MCF 10A (cell line): ENCODE measurements at regions of chr22 and their contacts with region 1.

Region 1: GRCh38 chr22:36065775-36066559 is 37.3 kb upstream of the RBFOX2 start:
- DNase-seq: peak; percentile 91
- H3K4me3 Mint-ChIP-seq: peak overlapping the region; percentile 75
- H3K27ac Mint-ChIP-seq: peak overlapping the region; percentile 82
- H3K4me1 Mint-ChIP-seq: no peaks in the 10 kb centered on the region
- H3K27me3 Mint-ChIP-seq: no peaks in the 10 kb centered on the region
- CTCF ChIP-seq: peak; percentile 99

Region 2: DNA sequence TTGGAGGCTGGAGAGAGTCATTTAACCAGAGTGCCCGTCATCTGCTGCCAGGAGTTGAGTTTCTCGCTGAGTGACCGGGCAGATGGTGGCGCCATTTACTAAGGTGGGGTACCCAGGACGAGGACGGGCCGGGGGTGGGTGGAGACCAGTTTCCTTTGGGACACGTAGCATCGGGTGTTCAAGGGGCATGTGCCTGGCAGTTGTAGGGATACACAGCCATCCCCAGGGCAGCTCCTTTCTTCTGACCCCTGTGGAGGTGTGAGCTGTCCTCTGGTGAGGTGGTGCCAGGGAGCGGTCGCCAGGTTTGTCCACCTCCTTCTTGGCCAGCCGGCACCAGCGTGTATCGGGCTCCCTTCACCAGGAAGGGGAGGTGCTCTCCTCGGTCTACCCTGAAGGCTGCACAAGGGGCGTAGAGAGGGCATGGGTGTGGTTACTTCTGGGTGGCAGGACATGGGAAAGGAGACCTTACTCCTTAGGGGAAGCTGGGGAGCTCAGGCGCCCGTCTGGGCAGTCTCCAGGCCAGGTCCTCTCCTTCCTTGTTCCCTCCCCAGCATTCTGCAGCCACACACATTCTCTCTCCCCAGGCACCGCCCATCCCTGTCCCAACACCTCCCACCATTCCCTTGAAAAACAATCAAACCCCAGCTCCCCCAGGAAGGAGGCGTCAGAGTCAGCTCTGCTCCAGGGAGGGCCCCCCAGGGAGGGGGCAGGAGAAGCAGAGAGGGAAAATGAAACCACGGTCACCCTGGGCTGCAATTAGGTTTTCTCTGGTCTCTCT is 438.5 kb before region 1 on chr22:
- CTCF ChIA-PET with region 1: interaction called, 17 read pairs
- POLR2A ChIA-PET with region 1: interaction called, 3 read pairs
- intact Hi-C with region 1: loop called (anchors 5 kb)
- DNase-seq: peak; percentile 88
- H3K4me3 Mint-ChIP-seq: peak overlapping the region; percentile 77
- H3K27ac Mint-ChIP-seq: peak overlapping the region; percentile 96
- H3K4me1 Mint-ChIP-seq: peaks cover 35% of the 10 kb centered on the region
- H3K27me3 Mint-ChIP-seq: no peaks in the 10 kb centered on the region
- CTCF ChIP-seq: peak; percentile 58

Region 3: DNA sequence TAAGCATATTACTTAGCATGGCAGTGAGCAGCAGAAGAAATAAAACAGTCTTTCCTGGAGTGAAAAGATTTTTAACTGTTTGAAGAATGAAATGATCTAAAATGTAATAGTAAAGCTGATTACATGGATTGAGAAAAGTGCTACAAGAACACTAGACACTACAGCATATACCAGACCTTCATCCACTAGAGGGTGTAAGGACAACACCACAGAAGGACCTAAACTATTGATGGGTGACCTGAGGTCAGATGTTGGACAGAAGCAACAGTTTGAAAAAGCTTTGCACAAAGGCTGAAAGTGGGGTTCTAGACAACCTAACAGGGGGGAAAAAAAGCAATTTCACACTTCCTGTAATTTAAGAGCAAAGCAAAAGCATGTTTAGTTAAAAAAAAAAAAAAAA is 135.0 kb before region 1 on chr22:
- CTCF ChIA-PET with region 1: interaction called, 48 read pairs
- POLR2A ChIA-PET with region 1: interaction called, 3 read pairs
- intact Hi-C with region 1: loop called (anchors 1 kb)
- DNase-seq: peak; percentile 63
- H3K4me3 Mint-ChIP-seq: no peak overlapping the region
- H3K27ac Mint-ChIP-seq: peak overlapping the region; percentile 21
- H3K4me1 Mint-ChIP-seq: no peaks in the 10 kb centered on the region
- H3K27me3 Mint-ChIP-seq: no peaks in the 10 kb centered on the region
- CTCF ChIP-seq: peak; percentile 54

Region 4: DNA sequence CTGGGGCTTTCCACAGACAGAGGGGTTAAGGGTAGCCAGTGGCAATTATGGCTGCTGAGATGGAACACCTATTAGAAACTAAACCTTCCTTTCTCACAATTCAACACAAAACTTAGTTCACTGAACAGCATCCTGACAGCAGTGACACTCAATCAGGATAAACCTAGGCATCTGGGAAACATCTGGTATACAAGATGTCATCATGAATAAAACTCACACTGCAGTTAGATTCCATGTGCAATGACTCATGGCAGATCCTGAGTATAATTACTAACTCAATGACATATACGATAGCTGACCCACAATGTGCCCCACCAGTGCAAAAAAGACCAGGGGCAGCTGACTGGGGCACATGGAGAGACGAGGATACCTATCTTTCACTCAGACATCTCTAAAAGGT is 55.1 kb before region 1 on chr22:
- CTCF ChIA-PET with region 1: interaction called, 13 read pairs
- POLR2A ChIA-PET with region 1: no interaction called
- intact Hi-C with region 1: no loop called
- DNase-seq: peak; percentile 34
- H3K4me3 Mint-ChIP-seq: no peak overlapping the region
- H3K27ac Mint-ChIP-seq: no peak overlapping the region
- H3K4me1 Mint-ChIP-seq: peaks cover 16% of the 10 kb centered on the region
- H3K27me3 Mint-ChIP-seq: no peaks in the 10 kb centered on the region
- CTCF ChIP-seq: no peak

Region 5: DNA sequence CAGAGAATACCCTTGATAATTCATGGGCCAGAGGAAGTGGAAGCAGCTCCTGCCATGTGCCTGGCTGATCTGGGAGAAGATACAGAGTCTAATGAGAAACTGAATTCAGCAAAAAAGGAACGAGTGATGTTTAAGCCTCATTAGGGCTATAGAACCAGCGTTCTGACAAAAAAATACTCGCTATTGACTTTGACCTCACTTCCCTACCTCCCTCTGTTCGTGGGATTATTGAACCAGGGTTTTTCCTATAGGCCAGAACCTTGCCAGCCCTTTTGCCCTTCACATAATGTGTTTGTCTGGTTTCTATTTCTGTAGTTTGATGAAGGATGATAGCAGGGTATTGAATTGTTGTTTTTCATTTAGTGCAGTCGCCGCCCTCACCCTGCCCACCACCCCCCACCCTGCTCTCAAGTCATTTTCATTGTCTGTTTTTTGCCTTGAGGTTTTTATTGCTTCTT is 29.8 kb before region 1 on chr22:
- CTCF ChIA-PET with region 1: interaction called, 18 read pairs
- POLR2A ChIA-PET with region 1: no interaction called
- intact Hi-C with region 1: no loop called
- DNase-seq: no peak
- H3K4me3 Mint-ChIP-seq: no peak overlapping the region
- H3K27ac Mint-ChIP-seq: no peak overlapping the region
- H3K4me1 Mint-ChIP-seq: no peaks in the 10 kb centered on the region
- H3K27me3 Mint-ChIP-seq: peaks cover 13% of the 10 kb centered on the region
- CTCF ChIP-seq: no peak

Region 6: GRCh38 chr22:36081023-36081431 is 15.1 kb after region 1 on chr22:
- CTCF ChIA-PET with region 1: interaction called, 64 read pairs
- POLR2A ChIA-PET with region 1: interaction called, 6 read pairs
- intact Hi-C with region 1: no loop called
- DNase-seq: no peak
- H3K4me3 Mint-ChIP-seq: no peak overlapping the region
- H3K27ac Mint-ChIP-seq: no peak overlapping the region
- H3K4me1 Mint-ChIP-seq: peaks cover 5% of the 10 kb centered on the region
- H3K27me3 Mint-ChIP-seq: no peaks in the 10 kb centered on the region
- CTCF ChIP-seq: no peak

Region 7: DNA sequence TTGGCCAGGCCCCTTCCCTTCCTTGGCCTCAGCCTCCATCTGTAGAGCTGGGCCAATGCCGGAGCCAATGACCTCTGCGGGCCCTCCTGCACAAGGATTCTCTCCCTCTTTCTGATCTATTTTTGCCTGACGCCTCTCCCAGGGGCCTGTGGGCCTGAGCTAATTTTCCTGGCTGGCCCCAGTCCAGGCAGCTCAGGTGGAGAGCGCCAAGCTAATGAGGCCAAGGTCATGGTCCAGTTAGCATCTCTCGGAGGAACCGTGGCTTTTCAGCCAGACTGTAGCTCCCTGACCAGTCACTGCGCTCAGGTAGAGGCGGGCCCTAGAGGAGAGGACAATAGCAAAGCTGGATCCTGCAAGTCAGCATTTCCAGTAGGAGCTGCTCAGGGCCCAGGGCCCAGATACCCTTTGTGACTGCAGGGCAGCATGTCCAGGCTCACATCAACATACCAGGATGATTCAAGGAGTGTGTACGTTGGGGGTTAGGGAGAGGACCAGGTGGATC is 51.1 kb after region 1 on chr22:
- CTCF ChIA-PET with region 1: interaction called, 11 read pairs
- POLR2A ChIA-PET with region 1: no interaction called
- intact Hi-C with region 1: no loop called
- DNase-seq: no peak
- H3K4me3 Mint-ChIP-seq: no peak overlapping the region
- H3K27ac Mint-ChIP-seq: no peak overlapping the region
- H3K4me1 Mint-ChIP-seq: no peaks in the 10 kb centered on the region
- H3K27me3 Mint-ChIP-seq: no peaks in the 10 kb centered on the region
- CTCF ChIP-seq: no peak

Region 8: DNA sequence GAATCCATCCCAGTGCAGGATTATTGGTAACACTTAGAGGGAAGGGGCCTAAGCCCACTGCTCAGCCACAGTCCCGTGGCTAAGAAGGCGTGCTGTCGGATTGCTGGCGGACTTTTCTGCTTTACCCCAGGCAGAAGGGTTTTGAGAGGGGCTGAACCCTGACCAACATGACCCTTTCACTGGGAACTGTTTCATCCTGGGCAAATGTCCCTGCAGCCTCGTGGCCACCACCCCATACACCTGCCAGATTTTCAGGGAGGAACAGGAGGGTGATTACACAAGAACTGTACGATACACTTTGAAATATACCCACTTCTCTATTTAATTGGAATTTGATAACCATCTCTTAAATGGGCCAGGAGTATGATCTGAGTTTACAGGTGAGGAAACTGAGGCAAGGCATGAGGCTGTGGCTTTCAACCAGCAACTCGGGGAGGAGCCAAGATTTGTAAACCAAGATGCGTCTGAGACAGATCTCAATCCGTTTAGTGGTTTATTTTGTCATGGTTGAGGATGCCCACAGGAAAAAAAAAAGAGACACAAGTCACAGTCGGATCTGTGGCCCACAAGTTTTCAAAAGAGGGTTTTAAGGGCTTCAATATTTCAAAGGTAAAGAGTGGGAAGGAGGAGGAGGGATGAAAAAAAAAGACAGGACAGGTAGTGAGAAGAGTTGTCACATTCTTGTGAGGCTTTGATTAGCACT is 100.7 kb after region 1 on chr22:
- CTCF ChIA-PET with region 1: no interaction called
- POLR2A ChIA-PET with region 1: no interaction called
- intact Hi-C with region 1: no loop called
- DNase-seq: no peak
- H3K4me3 Mint-ChIP-seq: no peak overlapping the region
- H3K27ac Mint-ChIP-seq: no peak overlapping the region
- H3K4me1 Mint-ChIP-seq: peaks cover 6% of the 10 kb centered on the region
- H3K27me3 Mint-ChIP-seq: peaks cover 32% of the 10 kb centered on the region
- CTCF ChIP-seq: no peak

Region 9: DNA sequence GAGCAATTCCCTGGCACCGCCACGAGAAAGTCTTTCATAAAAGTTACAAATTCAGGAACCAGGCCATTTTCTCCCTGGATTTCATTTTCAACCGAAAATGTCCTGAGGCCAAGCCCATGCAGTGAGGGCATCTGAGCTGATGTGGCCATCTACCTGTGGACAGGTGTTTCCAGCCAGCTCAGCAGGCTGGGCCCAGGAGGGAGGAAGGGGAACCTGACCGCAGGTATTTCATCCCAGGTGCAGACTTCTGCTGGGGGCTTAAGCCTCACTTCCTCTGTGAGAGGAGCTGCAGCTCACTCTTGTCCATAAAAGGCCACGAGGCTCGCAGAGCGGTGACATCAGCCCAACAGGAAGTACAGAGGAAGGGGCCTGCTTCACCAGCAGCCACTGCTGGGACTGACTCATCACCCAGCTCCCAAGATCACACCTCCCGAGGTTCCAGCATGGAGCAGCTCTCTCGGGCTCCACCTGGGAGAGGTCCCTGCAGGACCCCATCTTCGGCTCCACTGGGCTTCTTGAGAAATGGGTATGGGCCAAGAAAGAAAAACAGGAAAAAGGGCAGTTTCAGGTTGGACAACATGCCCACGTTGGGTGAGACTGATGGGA is 265.4 kb after region 1 on chr22:
- CTCF ChIA-PET with region 1: no interaction called
- POLR2A ChIA-PET with region 1: no interaction called
- intact Hi-C with region 1: no loop called
- DNase-seq: peak; percentile 97
- H3K4me3 Mint-ChIP-seq: peak overlapping the region; percentile 64
- H3K27ac Mint-ChIP-seq: peak overlapping the region; percentile 98
- H3K4me1 Mint-ChIP-seq: peaks cover 73% of the 10 kb centered on the region
- H3K27me3 Mint-ChIP-seq: no peaks in the 10 kb centered on the region
- CTCF ChIP-seq: no peak